CD4-positive, alpha-beta T cell (primary cell): ENCODE measurements at regions of chr5 and their contacts with region 1.

Region 1: GRCh38 chr5:56105511-56106291 is 110.9 kb upstream of the IL6ST start:
- DNase-seq: no peak
- ATAC-seq: peak; percentile 13
- H3K4me3 ChIP-seq: no peak overlapping the region
- H3K4me3 Mint-ChIP-seq: peak overlapping the region; percentile 73
- H3K27ac ChIP-seq: peak overlapping the region; percentile 39 to 45
- H3K27ac Mint-ChIP-seq: peak overlapping the region; percentile 88
- H3K4me1 ChIP-seq: peaks cover 38% of the 10 kb centered on the region
- H3K4me1 Mint-ChIP-seq: peaks cover 77% of the 10 kb centered on the region
- H3K27me3 ChIP-seq: no peaks in the 10 kb centered on the region
- H3K27me3 Mint-ChIP-seq: no peaks in the 10 kb centered on the region
- CTCF ChIP-seq: no peak

Region 2: GRCh38 chr5:55982957-55983381 is 122.7 kb before region 1 on chr5:
- CTCF ChIA-PET with region 1: interaction called, 4 read pairs
- POLR2A ChIA-PET with region 1: interaction called, 6 read pairs
- intact Hi-C with region 1: loop called (anchors 2 to 5 kb)
- DNase-seq: peak in 7 of 14 experiments; percentile 18 to 71 (median 38)
- ATAC-seq: peak; percentile 44
- H3K4me3 ChIP-seq: peak overlapping the region; percentile 11
- H3K4me3 Mint-ChIP-seq: peak overlapping the region; percentile 72
- H3K27ac ChIP-seq: peak overlapping the region in 1 of 2 donors; percentile 10
- H3K27ac Mint-ChIP-seq: peak overlapping the region; percentile 94
- H3K4me1 ChIP-seq: peaks cover 31% of the 10 kb centered on the region
- H3K4me1 Mint-ChIP-seq: peaks cover 90% of the 10 kb centered on the region
- H3K27me3 ChIP-seq: no peaks in the 10 kb centered on the region
- H3K27me3 Mint-ChIP-seq: no peaks in the 10 kb centered on the region
- CTCF ChIP-seq: peak; percentile 66

Region 3: DNA sequence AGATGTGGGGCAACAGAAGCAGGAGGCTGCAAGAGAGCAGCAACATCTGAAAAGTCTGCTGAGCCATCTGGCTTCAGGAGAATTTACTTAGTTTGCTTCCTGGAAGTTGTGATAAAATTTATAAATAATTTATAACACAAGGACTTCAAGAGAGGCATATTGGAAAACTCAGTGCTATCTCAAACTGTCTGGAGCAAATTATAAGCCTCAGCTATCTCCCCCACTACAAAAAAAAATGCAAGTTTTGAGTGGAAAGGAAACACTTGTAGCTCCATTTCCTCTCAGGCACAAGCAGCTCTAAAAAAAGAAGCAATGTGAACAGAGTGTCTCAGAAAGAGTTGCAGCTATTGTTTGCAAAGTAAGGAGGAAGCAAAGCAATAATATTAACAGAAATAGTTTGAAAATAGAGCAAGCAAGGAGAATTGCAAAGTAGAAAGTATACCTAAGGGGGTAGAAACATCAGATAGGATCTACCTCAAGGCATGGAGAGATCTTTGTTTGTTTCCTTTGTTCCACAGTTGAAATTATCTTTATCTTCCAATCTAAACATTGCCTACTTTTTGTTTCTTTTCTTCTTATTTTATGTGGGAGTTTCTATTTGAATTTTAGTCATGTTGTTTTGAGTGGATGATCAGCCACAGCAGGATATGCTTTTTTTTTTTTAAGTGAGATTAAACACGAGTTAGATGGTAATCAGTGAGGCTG is 55.0 kb before region 1 on chr5:
- CTCF ChIA-PET with region 1: no interaction called
- POLR2A ChIA-PET with region 1: interaction called, 10 read pairs
- intact Hi-C with region 1: loop called in 1 of 2 experiments (anchors 5 kb)
- DNase-seq: peak in 3 of 14 experiments; percentile 37 to 56 (median 44)
- ATAC-seq: peak; percentile 73
- H3K4me3 ChIP-seq: peak overlapping the region; percentile 4
- H3K4me3 Mint-ChIP-seq: peak overlapping the region; percentile 77
- H3K27ac ChIP-seq: peak overlapping the region; percentile 40 to 54
- H3K27ac Mint-ChIP-seq: peak overlapping the region; percentile 84
- H3K4me1 ChIP-seq: peaks cover 59% of the 10 kb centered on the region
- H3K4me1 Mint-ChIP-seq: peaks cover 74% of the 10 kb centered on the region
- H3K27me3 ChIP-seq: no peaks in the 10 kb centered on the region
- H3K27me3 Mint-ChIP-seq: no peaks in the 10 kb centered on the region
- CTCF ChIP-seq: no peak

Region 4: GRCh38 chr5:56064984-56065383 is 40.7 kb before region 1 on chr5:
- CTCF ChIA-PET with region 1: interaction called, 4 read pairs
- POLR2A ChIA-PET with region 1: interaction called, 3 read pairs
- intact Hi-C with region 1: loop called in 1 of 2 experiments (anchors 5 kb)
- DNase-seq: no peak
- ATAC-seq: no peak
- H3K4me3 ChIP-seq: no peak overlapping the region
- H3K4me3 Mint-ChIP-seq: no peak overlapping the region
- H3K27ac ChIP-seq: no peak overlapping the region
- H3K27ac Mint-ChIP-seq: peak overlapping the region; percentile 57
- H3K4me1 ChIP-seq: peaks cover 35% of the 10 kb centered on the region
- H3K4me1 Mint-ChIP-seq: peaks cover 63% of the 10 kb centered on the region
- H3K27me3 ChIP-seq: no peaks in the 10 kb centered on the region
- H3K27me3 Mint-ChIP-seq: no peaks in the 10 kb centered on the region
- CTCF ChIP-seq: no peak

Region 5: GRCh38 chr5:56126487-56127179 is 20.9 kb after region 1 on chr5:
- CTCF ChIA-PET with region 1: interaction called, 6 read pairs
- POLR2A ChIA-PET with region 1: interaction called, 18 read pairs
- intact Hi-C with region 1: no loop called
- DNase-seq: peak in 4 of 14 experiments; percentile 10 to 29 (median 24)
- ATAC-seq: peak; percentile 54
- H3K4me3 ChIP-seq: no peak overlapping the region
- H3K4me3 Mint-ChIP-seq: peak overlapping the region; percentile 70
- H3K27ac ChIP-seq: peak overlapping the region; percentile 23 to 64
- H3K27ac Mint-ChIP-seq: peak overlapping the region; percentile 91
- H3K4me1 ChIP-seq: peaks cover 34% of the 10 kb centered on the region
- H3K4me1 Mint-ChIP-seq: peaks cover 70% of the 10 kb centered on the region
- H3K27me3 ChIP-seq: no peaks in the 10 kb centered on the region
- H3K27me3 Mint-ChIP-seq: no peaks in the 10 kb centered on the region
- CTCF ChIP-seq: no peak

Region 6: GRCh38 chr5:56155992-56156584 is 50.4 kb after region 1 on chr5:
- CTCF ChIA-PET with region 1: no interaction called
- POLR2A ChIA-PET with region 1: interaction called, 8 read pairs
- intact Hi-C with region 1: loop called in 1 of 2 experiments (anchors 2 kb)
- DNase-seq: peak in 2 of 14 experiments; percentile 59 to 65
- ATAC-seq: no peak
- H3K4me3 ChIP-seq: no peak overlapping the region
- H3K4me3 Mint-ChIP-seq: peak overlapping the region; percentile 78
- H3K27ac ChIP-seq: peak overlapping the region; percentile 65 to 71
- H3K27ac Mint-ChIP-seq: peak overlapping the region; percentile 100
- H3K4me1 ChIP-seq: peaks cover 71% of the 10 kb centered on the region
- H3K4me1 Mint-ChIP-seq: peaks cover 86% of the 10 kb centered on the region
- H3K27me3 ChIP-seq: no peaks in the 10 kb centered on the region
- H3K27me3 Mint-ChIP-seq: no peaks in the 10 kb centered on the region
- CTCF ChIP-seq: no peak